ENCODE measurements at regions of chr12 and their contacts with region 1.

Region 1: GRCh38 chr12:111699-112493 is 45.3 kb downstream of the IQSEC3 start:
- DNase-seq: no peak
- H3K4me3 ChIP-seq: no peak overlapping the region
- CTCF ChIP-seq: no peak

Region 2: GRCh38 chr12:22530-23201 is 89.2 kb before region 1 on chr12:
- in situ Hi-C with region 1: no loop called
- DNase-seq: no peak
- H3K4me3 ChIP-seq: no peak overlapping the region
- CTCF ChIP-seq: no peak

Region 3: DNA sequence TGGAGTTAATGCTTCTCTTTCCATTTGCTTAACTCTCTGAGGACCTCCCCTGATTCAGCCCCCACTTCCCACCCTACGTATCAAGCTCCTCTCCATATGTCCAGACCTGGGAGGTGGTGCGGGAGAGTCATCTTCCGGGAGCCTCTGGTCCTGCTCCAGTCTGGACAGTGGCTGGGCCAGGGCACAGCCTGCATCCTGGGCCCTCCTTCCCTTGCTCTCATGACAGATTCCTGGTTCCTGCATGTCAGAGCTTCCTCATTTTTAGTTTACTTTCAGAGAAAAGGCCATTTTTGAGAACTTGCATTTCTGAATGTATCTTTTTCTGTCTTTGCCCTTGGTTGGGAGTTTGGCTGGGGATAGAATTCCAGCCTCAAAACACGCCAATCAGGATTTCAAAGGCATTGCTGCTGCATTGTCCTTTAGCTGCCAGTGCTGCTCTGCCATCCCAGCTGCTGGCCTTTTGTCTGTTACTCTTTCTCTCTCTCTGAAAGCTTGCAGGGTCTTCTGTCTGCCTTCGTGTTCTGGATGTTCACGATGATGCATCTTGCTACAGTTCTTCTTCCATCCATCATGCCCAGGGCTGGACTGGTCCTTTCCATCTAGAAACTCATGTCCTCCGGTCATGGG is 47.4 kb after region 1 on chr12:
- in situ Hi-C with region 1: loop called (anchors 5 kb)
- DNase-seq: no peak
- H3K4me3 ChIP-seq: no peak overlapping the region
- CTCF ChIP-seq: no peak

Measured in astrocyte of the cerebellum (primary cell).